PC-3 (cell line): ENCODE measurements at regions of chr7 and their contacts with region 1.

Region 1: DNA sequence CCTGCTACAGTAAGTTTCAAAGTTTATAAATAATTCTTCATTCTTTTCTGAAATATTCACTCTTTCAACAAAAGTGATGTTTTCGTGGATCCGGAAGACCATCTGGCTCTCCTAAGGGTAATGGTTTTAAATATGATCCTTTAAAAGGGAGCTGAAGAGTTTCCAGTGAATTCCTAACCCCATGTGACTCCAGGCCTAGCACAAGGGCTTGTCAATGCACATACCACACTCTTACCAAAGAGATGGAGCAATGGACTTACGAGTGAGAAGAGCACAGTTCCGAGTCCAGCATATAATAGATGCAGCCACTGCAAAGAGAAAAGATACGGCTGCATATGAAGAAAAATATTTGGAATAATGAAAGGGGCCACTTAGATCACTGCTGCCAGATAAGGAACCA is 32.1 kb upstream of the GATAD1 start:
- DNase-seq: no peak
- ATAC-seq: no peak
- H3K4me3 ChIP-seq: no peak overlapping the region
- H3K27ac ChIP-seq: no peak overlapping the region
- H3K4me1 ChIP-seq: no peaks in the 10 kb centered on the region
- H3K27me3 ChIP-seq: no peaks in the 10 kb centered on the region
- CTCF ChIP-seq: no peak

Region 2: GRCh38 chr7:92178927-92179924 is 236.0 kb before region 1 on chr7 and contains the start of gene LRRD1:
- CTCF ChIA-PET with region 1: no interaction called
- POLR2A ChIA-PET with region 1: no interaction called
- intact Hi-C with region 1: no loop called
- DNase-seq: peak; percentile 86
- ATAC-seq: peak; percentile 98
- H3K4me3 ChIP-seq: peak within 1 kb of the TSS; percentile 63
- H3K27ac ChIP-seq: no peak within 1 kb of the TSS
- H3K4me1 ChIP-seq: peaks cover 9% of the 10 kb centered on the region
- H3K27me3 ChIP-seq: no peaks in the 10 kb centered on the region
- CTCF ChIP-seq: peak; percentile 88
- total RNA-seq, gene LRRD1: not detected in 2 replicates

Region 3: DNA sequence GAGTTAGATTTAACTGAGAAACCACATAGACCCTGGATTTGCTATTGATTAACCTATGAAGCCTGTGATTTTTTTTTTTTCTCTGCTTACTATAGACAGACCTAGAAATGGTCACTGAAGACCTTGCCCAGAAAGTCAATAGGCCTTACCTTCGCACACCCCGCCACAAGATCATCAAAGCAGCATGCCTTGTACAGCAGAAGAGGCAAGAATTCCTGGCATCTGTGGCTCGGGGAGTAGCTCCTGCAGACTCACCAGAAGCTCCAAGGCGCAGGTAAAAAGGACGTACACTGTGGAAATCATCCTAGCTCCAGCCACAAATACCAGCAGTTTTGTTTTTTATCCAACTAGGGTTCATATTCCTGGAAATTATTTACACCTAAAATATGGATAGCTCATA is 24.2 kb before region 1 on chr7:
- CTCF ChIA-PET with region 1: no interaction called
- POLR2A ChIA-PET with region 1: interaction called, 11 read pairs
- intact Hi-C with region 1: no loop called
- DNase-seq: no peak
- ATAC-seq: no peak
- H3K4me3 ChIP-seq: no peak overlapping the region
- H3K27ac ChIP-seq: no peak overlapping the region
- H3K4me1 ChIP-seq: no peaks in the 10 kb centered on the region
- H3K27me3 ChIP-seq: no peaks in the 10 kb centered on the region
- CTCF ChIP-seq: no peak